Tibial artery (tissue), 4 donors: ENCODE measurements at regions of chr5 and their contacts with region 1.

Region 1: DNA sequence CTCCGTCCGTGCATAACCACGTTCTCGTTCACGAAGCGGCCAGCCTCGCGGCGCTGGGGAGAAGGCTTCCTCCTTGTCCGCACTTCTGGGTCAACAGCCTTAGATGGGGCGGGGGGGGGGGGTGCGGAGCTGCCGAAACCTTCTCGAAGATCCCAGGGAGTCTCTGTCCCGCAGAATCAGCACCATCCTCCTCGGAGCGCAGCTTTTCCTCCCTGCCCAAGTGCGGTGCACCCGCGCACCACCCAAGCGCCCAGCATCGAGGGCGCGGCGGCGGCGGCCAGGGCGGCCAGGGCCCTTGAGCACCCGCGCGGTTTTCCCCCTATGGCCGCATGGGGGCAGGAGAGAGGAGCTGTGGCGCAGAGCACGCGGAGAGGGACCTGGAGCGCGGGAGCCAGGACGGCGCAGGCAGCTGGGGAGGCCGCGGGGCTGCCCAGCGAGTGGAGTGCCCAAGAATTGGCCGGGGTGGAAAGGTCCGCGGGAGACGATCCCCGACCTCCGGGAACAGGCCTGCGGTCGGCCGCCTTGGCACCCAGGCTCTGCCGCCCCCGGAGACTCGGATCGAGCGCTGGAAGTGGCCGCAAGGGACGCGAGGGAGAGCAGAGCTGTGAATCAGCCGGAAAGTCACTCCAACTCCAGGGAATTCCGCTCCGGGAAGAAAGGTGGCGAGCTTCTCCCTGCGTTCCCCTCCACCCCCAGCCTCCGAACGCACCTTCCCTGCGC is 43.1 kb downstream of the TMEM174 start:
- DNase-seq: peak; percentile 76 to 80
- H3K4me3 ChIP-seq: peak overlapping the region; percentile 37 to 56
- H3K27ac ChIP-seq: peak overlapping the region; percentile 8 to 21
- H3K4me1 ChIP-seq: peaks cover 0 to 15% (median 9%) of the 10 kb centered on the region in 4 donors
- H3K27me3 ChIP-seq: peaks cover 0 to 48% of the 10 kb centered on the region in 2 donors
- CTCF ChIP-seq: peak; percentile 84 to 86

Region 2: GRCh38 chr5:73312146-73312871 is 96.3 kb after region 1 on chr5:
- intact Hi-C with region 1: no loop called
- DNase-seq: peak in 1 of 2 donors; percentile 45
- H3K4me3 ChIP-seq: no peak overlapping the region
- H3K27ac ChIP-seq: peak overlapping the region in 1 of 2 donors; percentile 36
- H3K4me1 ChIP-seq: peaks cover 0 to 17% (median 8%) of the 10 kb centered on the region in 4 donors
- H3K27me3 ChIP-seq: peaks cover 0 to 51% of the 10 kb centered on the region in 2 donors
- CTCF ChIP-seq: no peak

Region 3: DNA sequence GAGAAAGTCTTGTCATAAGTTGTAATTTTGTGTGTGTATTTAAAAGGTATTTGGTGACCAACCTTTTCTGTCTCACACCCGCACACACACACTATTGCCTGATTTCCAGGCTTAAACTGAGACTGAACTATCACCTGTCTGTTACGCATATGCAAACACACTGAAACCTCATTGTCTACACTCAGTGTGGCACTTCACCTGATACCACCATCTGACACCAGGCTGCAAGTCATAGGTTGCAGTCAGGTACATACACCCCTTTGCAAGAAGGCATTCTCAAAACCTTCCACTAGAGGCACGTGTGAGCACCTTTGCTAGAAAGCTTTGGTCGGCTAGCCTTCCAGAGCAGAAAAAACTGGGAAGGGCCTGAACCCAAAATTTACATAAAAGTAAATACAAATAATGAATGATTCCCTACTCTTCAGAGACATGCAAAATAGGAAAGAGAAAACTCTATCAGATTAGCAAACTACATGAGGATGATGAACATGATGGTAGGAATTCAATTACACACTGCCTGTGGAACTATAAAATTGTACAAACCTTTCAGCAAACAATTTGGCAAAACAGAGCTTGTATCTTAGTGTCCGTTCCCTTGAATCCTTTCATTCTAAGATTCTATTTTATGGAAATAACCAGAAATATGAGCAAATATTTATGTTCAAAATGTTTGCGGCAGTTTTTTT is 238.4 kb after region 1 on chr5:
- intact Hi-C with region 1: loop called (anchors 5 kb)
- DNase-seq: no peak
- H3K4me3 ChIP-seq: no peak overlapping the region
- H3K27ac ChIP-seq: no peak overlapping the region
- H3K4me1 ChIP-seq: peaks cover 0 to 14% (median 10%) of the 10 kb centered on the region in 4 donors
- H3K27me3 ChIP-seq: peaks cover 3 to 79% of the 10 kb centered on the region in 2 donors
- CTCF ChIP-seq: peak; percentile 52 to 68

Region 4: GRCh38 chr5:73638344-73639095 is 422.5 kb after region 1 on chr5:
- intact Hi-C with region 1: no loop called
- DNase-seq: no peak
- H3K4me3 ChIP-seq: no peak overlapping the region
- H3K27ac ChIP-seq: peak overlapping the region in 1 of 2 donors; percentile 10
- H3K4me1 ChIP-seq: peaks cover 0 to 18% (median 2%) of the 10 kb centered on the region in 4 donors
- H3K27me3 ChIP-seq: no peaks in the 10 kb centered on the region
- CTCF ChIP-seq: no peak

Region 5: DNA sequence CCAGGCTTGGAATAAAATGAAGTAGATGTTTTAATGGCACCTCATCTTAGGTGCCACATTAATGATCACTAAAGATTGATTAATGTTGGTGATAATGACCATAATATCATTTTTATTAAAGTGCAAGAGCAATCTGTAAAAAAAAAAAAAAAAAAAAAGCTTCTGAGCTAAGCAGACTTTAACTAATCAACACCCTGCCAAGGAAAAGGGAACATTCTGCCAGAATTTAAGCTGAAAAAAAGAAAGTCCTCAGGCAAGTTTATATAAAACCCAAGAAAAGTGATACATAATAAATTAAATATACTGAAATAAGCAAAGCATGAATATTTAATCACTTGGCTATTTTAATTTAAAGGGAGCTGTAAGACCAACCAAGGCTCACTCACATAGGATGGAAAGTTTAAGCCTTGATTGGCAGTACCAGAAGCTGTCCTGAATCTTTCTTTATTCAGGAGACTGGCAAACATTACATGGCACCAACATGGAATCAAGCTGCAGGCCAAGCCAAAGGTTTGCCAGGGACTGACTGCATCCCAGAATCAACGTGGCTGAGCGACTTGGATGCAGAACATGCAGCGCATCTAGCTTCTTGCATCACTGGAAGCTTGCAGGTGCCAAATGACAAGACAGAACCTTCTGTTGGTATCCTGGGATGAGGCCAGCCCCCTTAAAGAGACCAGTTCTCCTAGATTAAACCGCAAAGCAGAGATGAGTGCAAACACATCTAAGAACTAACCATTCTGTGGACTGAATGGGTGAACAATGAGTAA is 1010.9 kb after region 1 on chr5:
- intact Hi-C with region 1: no loop called
- DNase-seq: no peak
- H3K4me3 ChIP-seq: no peak overlapping the region
- H3K27ac ChIP-seq: no peak overlapping the region
- H3K4me1 ChIP-seq: no peaks in the 10 kb centered on the region
- H3K27me3 ChIP-seq: no peaks in the 10 kb centered on the region
- CTCF ChIP-seq: no peak